Activated naive CD4-positive, alpha-beta T cell treated with anti-CD3 and anti-CD28 coated beads for 36 hours (primary cell): ENCODE measurements at regions of chr5 and their contacts with region 1.

Region 1: DNA sequence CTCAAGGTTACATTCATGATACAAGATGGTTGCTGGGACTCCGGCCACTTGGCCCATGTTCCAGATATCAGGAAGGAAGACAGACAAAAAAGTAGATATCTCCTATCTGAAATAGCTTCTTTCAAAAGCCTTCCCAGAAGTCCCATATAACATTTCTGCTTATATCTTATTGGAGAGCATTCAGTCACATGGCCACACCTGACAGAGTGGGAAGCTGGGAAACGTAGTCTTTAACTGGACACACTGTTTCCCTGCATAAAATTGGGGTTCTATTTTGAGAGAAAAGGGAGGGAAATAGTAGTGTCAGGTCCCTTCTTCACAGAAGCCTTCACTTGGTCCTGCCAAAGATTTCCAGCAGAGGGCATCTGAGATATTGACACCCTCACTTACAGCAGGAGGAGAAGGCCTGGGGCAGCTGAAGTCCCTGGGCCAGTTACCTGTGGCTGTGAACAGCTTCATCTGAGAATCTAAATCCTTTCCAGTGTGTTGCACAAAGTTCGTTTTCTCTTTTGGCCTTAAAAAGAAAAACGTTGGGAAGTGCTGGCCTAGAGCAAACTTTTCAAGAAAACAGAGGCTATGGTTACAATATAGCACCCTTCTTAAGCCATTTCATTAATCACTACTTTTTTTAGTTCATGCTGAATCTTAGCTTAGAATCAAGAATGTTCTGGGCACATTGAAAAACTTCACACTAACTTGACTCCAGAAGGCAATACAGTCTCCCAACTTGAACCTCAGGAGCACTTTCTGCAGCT is 33.5 kb downstream of the SPEF2 start:
- DNase-seq: peak; percentile 83
- H3K4me3 Mint-ChIP-seq: no peak overlapping the region
- H3K27ac Mint-ChIP-seq: no peak overlapping the region
- H3K4me1 Mint-ChIP-seq: peaks cover 9% of the 10 kb centered on the region
- H3K27me3 Mint-ChIP-seq: no peaks in the 10 kb centered on the region

Region 2: GRCh38 chr5:35626108-35626507 is 25.1 kb before region 1 on chr5:
- CTCF ChIA-PET with region 1: interaction called, 10 read pairs
- intact Hi-C with region 1: no loop called
- DNase-seq: no peak
- H3K4me3 Mint-ChIP-seq: no peak overlapping the region
- H3K27ac Mint-ChIP-seq: no peak overlapping the region
- H3K4me1 Mint-ChIP-seq: peaks cover 26% of the 10 kb centered on the region
- H3K27me3 Mint-ChIP-seq: no peaks in the 10 kb centered on the region

Region 3: GRCh38 chr5:35672995-35673394 is 21.8 kb after region 1 on chr5:
- CTCF ChIA-PET with region 1: interaction called, 8 read pairs
- intact Hi-C with region 1: loop called (anchors 1 kb)
- DNase-seq: peak; percentile 73
- H3K4me3 Mint-ChIP-seq: no peak overlapping the region
- H3K27ac Mint-ChIP-seq: peak overlapping the region; percentile 75
- H3K4me1 Mint-ChIP-seq: peaks cover 63% of the 10 kb centered on the region
- H3K27me3 Mint-ChIP-seq: no peaks in the 10 kb centered on the region

Region 4: DNA sequence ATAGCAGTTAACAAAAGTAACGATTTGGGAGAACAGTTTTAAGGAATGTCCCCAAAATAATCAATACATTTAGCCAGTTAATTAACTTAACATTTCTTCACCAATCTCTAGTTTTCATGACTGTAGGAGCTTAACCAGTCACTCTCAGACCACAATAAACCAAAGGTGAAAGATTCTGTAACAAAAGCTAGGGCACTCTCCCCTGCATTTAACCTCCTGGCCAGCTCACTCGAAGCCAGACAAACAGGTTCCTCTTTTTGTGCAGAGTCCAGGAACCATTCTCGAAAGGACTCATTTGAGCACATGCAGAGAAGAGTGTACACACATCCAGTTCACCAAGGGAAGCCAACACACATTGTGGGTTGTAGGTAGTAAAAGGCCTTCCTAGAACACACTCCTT is 212.0 kb after region 1 on chr5:
- CTCF ChIA-PET with region 1: interaction called, 10 read pairs
- intact Hi-C with region 1: no loop called
- DNase-seq: peak; percentile 50
- H3K4me3 Mint-ChIP-seq: peak overlapping the region; percentile 81
- H3K27ac Mint-ChIP-seq: peak overlapping the region; percentile 100
- H3K4me1 Mint-ChIP-seq: peaks cover 71% of the 10 kb centered on the region
- H3K27me3 Mint-ChIP-seq: no peaks in the 10 kb centered on the region

Region 5: GRCh38 chr5:35919191-35919590 is 268.0 kb after region 1 on chr5:
- CTCF ChIA-PET with region 1: interaction called, 146 read pairs
- intact Hi-C with region 1: no loop called
- DNase-seq: peak; percentile 54
- H3K4me3 Mint-ChIP-seq: no peak overlapping the region
- H3K27ac Mint-ChIP-seq: peak overlapping the region; percentile 46
- H3K4me1 Mint-ChIP-seq: peaks cover 45% of the 10 kb centered on the region
- H3K27me3 Mint-ChIP-seq: no peaks in the 10 kb centered on the region